ENCODE measurements at regions of chr4 and their contacts with region 1.

Region 1: DNA sequence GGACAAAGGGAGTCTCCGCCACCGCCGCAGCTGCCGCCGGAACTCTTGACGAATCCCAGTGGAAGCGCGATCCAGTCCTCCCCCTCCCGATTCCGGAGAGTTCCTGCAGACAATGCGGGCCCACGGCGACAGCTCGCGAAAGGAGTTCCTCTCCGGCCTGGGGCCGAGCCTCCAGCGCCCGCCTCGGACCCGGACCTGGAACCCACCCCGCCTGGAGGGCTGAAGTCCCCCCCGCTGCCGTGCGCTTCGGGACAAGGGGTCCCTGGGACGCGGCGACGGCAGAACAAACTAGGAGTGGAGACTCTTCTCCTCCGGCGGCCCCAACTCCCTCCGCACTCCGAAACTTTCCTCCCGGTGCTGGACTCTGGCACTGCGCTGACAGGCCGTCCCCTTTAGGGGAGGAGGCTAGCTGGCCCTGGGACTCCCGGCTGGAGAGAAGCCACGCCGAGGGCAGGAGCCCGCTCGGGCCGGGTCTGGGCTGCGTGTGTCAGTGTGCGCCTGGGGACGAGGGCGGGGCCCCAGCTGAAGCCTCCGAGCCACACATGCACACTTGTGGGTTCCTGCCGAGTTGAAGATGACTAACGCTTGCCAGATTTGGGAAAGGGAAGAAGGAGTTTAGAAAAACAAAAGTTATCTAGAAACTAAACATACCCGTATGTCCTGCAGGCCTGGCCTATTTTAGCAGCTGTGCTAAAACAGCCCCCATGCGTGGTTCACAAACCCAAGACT is at the start of gene ANTXR2:
- DNase-seq: peak; percentile 84
- H3K4me3 ChIP-seq: peak within 1 kb of the TSS; percentile 62 to 95 (median 88)
- H3K27ac ChIP-seq: peak within 1 kb of the TSS; percentile 82
- H3K4me1 ChIP-seq: peaks cover 43% of the 10 kb centered on the region
- H3K27me3 ChIP-seq: no peaks in the 10 kb centered on the region
- CTCF ChIP-seq: no peak
- POLR2A ChIP-seq: peak; percentile 78
- total RNA-seq, gene ANTXR2: 64.6 and 71.9 TPM in 2 replicates

Region 2: DNA sequence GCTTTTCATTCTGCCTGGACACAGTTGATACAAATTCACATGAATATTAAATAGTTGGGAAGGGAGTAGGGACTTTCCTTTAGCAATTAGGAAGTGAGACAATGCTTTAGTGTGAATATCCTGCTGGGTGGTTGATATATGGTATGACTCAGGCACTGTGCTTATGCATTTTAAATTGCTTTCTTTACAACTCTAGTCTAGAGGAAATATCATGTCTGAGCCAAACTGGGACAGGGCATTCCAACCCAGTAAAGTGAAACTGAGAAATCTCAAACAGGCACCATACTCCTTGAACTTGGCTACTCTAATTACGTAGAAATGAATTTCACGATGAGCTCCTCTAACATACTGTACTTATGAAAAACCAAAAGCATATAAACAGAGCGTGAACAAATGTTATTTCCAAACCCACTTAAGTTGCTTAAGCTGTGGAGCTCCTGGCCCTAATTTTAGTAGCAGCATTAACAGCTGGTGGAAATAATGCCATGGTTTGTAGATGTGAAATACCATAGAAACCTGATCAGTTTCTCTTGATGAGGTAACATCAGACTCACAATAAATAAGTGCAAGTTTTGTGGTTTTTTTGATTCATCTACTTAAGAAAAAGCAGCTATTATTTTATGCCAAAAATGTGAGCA is 422.0 kb before region 1 on chr4:
- CTCF ChIA-PET with region 1: no interaction called
- POLR2A ChIA-PET with region 1: no interaction called
- dilution Hi-C with region 1: no loop called
- intact Hi-C with region 1: loop called (anchors 2 kb)
- DNase-seq: peak; percentile 96
- H3K4me3 ChIP-seq: peak overlapping the region in 1 of 3 experiments; percentile 3
- H3K27ac ChIP-seq: peak overlapping the region; percentile 87
- H3K4me1 ChIP-seq: peaks cover 29% of the 10 kb centered on the region
- H3K27me3 ChIP-seq: no peaks in the 10 kb centered on the region
- CTCF ChIP-seq: no peak
- POLR2A ChIP-seq: no peak

Region 3: GRCh38 chr4:79917246-79917645 is 155.7 kb before region 1 on chr4:
- CTCF ChIA-PET with region 1: interaction called, 5 read pairs
- POLR2A ChIA-PET with region 1: no interaction called
- dilution Hi-C with region 1: no loop called
- intact Hi-C with region 1: loop called (anchors 1 kb)
- DNase-seq: peak; percentile 62
- H3K4me3 ChIP-seq: no peak overlapping the region
- H3K27ac ChIP-seq: no peak overlapping the region
- H3K4me1 ChIP-seq: no peaks in the 10 kb centered on the region
- H3K27me3 ChIP-seq: no peaks in the 10 kb centered on the region
- CTCF ChIP-seq: peak; percentile 73 to 78
- POLR2A ChIP-seq: no peak

Region 4: GRCh38 chr4:80007745-80008149 is 65.2 kb before region 1 on chr4:
- CTCF ChIA-PET with region 1: no interaction called
- POLR2A ChIA-PET with region 1: interaction called, 3 read pairs
- dilution Hi-C with region 1: no loop called
- intact Hi-C with region 1: loop called (anchors 1 kb)
- DNase-seq: peak; percentile 83
- H3K4me3 ChIP-seq: no peak overlapping the region
- H3K27ac ChIP-seq: peak overlapping the region; percentile 70
- H3K4me1 ChIP-seq: peaks cover 52% of the 10 kb centered on the region
- H3K27me3 ChIP-seq: no peaks in the 10 kb centered on the region
- CTCF ChIP-seq: no peak
- POLR2A ChIP-seq: peak; percentile 21

Region 5: GRCh38 chr4:80125252-80126177 is 52.6 kb after region 1 on chr4:
- CTCF ChIA-PET with region 1: interaction called, 6 read pairs
- POLR2A ChIA-PET with region 1: no interaction called
- dilution Hi-C with region 1: no loop called
- intact Hi-C with region 1: loop called (anchors 1 kb)
- DNase-seq: peak; percentile 65
- H3K4me3 ChIP-seq: no peak overlapping the region
- H3K27ac ChIP-seq: peak overlapping the region; percentile 82
- H3K4me1 ChIP-seq: peaks cover 43% of the 10 kb centered on the region
- H3K27me3 ChIP-seq: no peaks in the 10 kb centered on the region
- CTCF ChIP-seq: peak; percentile 40
- POLR2A ChIP-seq: no peak

Region 6: GRCh38 chr4:80184053-80184790 is 111.3 kb after region 1 on chr4:
- CTCF ChIA-PET with region 1: interaction called, 31 read pairs
- POLR2A ChIA-PET with region 1: no interaction called
- dilution Hi-C with region 1: no loop called
- intact Hi-C with region 1: loop called (anchors 1 kb)
- DNase-seq: peak; percentile 58
- H3K4me3 ChIP-seq: peak overlapping the region; percentile 56 to 99 (median 68)
- H3K27ac ChIP-seq: no peak overlapping the region
- H3K4me1 ChIP-seq: peaks cover 27% of the 10 kb centered on the region
- H3K27me3 ChIP-seq: peaks cover 43 to 48% of the 10 kb centered on the region in 2 experiments
- CTCF ChIP-seq: peak; percentile 83 to 91
- POLR2A ChIP-seq: no peak

Region 7: GRCh38 chr4:80335554-80336358 is 262.8 kb after region 1 on chr4 and contains the start of gene CFAP299:
- CTCF ChIA-PET with region 1: no interaction called
- POLR2A ChIA-PET with region 1: no interaction called
- dilution Hi-C with region 1: no loop called
- intact Hi-C with region 1: loop called (anchors 10 kb)
- DNase-seq: peak; percentile 68
- H3K4me3 ChIP-seq: peak within 1 kb of the TSS; percentile 37 to 67 (median 46)
- H3K27ac ChIP-seq: no peak within 1 kb of the TSS
- H3K4me1 ChIP-seq: peaks cover 6% of the 10 kb centered on the region
- H3K27me3 ChIP-seq: peaks cover 18 to 63% of the 10 kb centered on the region in 2 experiments
- CTCF ChIP-seq: peak; percentile 54 to 67
- POLR2A ChIP-seq: no peak
- total RNA-seq, gene CFAP299: not detected in 2 replicates